Natural killer cell (primary cell): ENCODE measurements at regions of chr7 and their contacts with region 1.

Region 1: DNA sequence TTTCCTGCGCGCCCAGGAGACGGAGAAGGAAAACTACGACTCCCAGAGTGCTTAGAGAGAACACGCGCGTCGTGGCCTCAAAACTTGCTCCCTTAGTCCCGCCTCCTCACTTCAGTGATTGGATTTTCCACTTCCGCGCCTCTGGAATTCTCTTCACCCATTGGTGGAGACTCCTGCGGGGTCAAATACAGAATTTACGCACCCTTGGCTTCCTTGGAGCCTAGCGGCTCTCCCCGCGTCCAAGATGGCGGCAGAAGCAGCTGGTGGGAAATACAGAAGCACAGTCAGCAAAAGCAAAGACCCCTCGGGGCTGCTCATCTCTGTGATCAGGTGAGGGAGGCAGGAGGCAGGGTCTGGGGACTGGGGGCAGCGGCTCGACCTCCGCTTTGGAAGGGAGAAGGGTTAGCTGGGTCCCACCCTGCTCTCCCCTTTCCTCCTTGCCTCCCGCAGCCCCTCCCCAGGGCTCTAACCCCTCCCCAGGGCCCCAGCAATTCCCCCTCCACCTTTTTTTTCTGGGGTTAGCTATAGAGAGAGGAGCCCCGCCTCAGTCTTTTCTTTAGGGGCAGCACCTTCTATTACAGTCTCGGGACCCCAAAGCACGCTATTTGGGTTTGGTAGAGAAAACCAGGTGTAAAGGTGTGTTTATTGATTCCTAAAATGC is at the start of gene EXOC4:
- DNase-seq: peak; percentile 86 to 98
- ATAC-seq: peak; percentile 97 to 99 (median 99)
- H3K4me3 ChIP-seq: peak within 1 kb of the TSS; percentile 79
- H3K4me3 Mint-ChIP-seq: peak within 1 kb of the TSS; percentile 94
- H3K27ac ChIP-seq: peak within 1 kb of the TSS; percentile 86
- H3K27ac Mint-ChIP-seq: peak within 1 kb of the TSS; percentile 90 to 95
- H3K4me1 ChIP-seq: peaks cover 7% of the 10 kb centered on the region
- H3K4me1 Mint-ChIP-seq: peaks cover 41 to 45% of the 10 kb centered on the region in 2 donors
- H3K27me3 ChIP-seq: no peaks in the 10 kb centered on the region
- H3K27me3 Mint-ChIP-seq: no peaks in the 10 kb centered on the region
- CTCF ChIP-seq: no peak
- total RNA-seq, gene EXOC4: 105 to 148 (median 123) TPM

Region 2: GRCh38 chr7:132430861-132431822 is 821.8 kb before region 1 on chr7:
- intact Hi-C with region 1: loop called (anchors 10 kb)
- DNase-seq: peak; percentile 66 to 84
- ATAC-seq: peak; percentile 82 to 89 (median 86)
- H3K4me3 ChIP-seq: no peak overlapping the region
- H3K4me3 Mint-ChIP-seq: peak overlapping the region; percentile 51
- H3K27ac ChIP-seq: peak overlapping the region; percentile 94
- H3K27ac Mint-ChIP-seq: peak overlapping the region; percentile 82 to 88
- H3K4me1 ChIP-seq: peaks cover 88% of the 10 kb centered on the region
- H3K4me1 Mint-ChIP-seq: peaks cover 81 to 88% of the 10 kb centered on the region in 2 donors
- H3K27me3 ChIP-seq: no peaks in the 10 kb centered on the region
- H3K27me3 Mint-ChIP-seq: no peaks in the 10 kb centered on the region
- CTCF ChIP-seq: no peak

Region 3: GRCh38 chr7:133081599-133082389 is 171.2 kb before region 1 on chr7 and contains the start of gene CHCHD3:
- intact Hi-C with region 1: loop called (anchors 1 kb)
- DNase-seq: peak; percentile 91 to 98
- ATAC-seq: peak; percentile 97 to 99 (median 98)
- H3K4me3 ChIP-seq: peak within 1 kb of the TSS; percentile 93
- H3K4me3 Mint-ChIP-seq: peak within 1 kb of the TSS; percentile 93
- H3K27ac ChIP-seq: peak within 1 kb of the TSS; percentile 84
- H3K27ac Mint-ChIP-seq: peak within 1 kb of the TSS; percentile 89 to 94
- H3K4me1 ChIP-seq: peaks cover 8% of the 10 kb centered on the region
- H3K4me1 Mint-ChIP-seq: peaks cover 28 to 36% of the 10 kb centered on the region in 2 donors
- H3K27me3 ChIP-seq: no peaks in the 10 kb centered on the region
- H3K27me3 Mint-ChIP-seq: peaks cover 8 to 13% of the 10 kb centered on the region in 2 donors
- CTCF ChIP-seq: no peak
- total RNA-seq, gene CHCHD3: 35.2 to 41.0 (median 35.9) TPM

Region 4: GRCh38 chr7:133481676-133482075 is 228.7 kb after region 1 on chr7:
- intact Hi-C with region 1: loop called (anchors 10 kb)
- DNase-seq: peak in 1 of 2 donors; percentile 8
- ATAC-seq: peak in 1 of 3 donors; percentile 19
- H3K4me3 ChIP-seq: no peak overlapping the region
- H3K4me3 Mint-ChIP-seq: peak overlapping the region; percentile 86
- H3K27ac ChIP-seq: no peak overlapping the region
- H3K27ac Mint-ChIP-seq: peak overlapping the region; percentile 70 to 83
- H3K4me1 ChIP-seq: peaks cover 62% of the 10 kb centered on the region
- H3K4me1 Mint-ChIP-seq: peaks cover 89 to 92% of the 10 kb centered on the region in 2 donors
- H3K27me3 ChIP-seq: no peaks in the 10 kb centered on the region
- H3K27me3 Mint-ChIP-seq: no peaks in the 10 kb centered on the region
- CTCF ChIP-seq: no peak